ENCODE measurements at regions of chr10 and their contacts with region 1.

Region 1: GRCh38 chr10:62268399-62269114 is at the start of gene RTKN2:
- DNase-seq: peak; percentile 100
- ATAC-seq: peak; percentile 81
- H3K4me3 ChIP-seq: peak within 1 kb of the TSS; percentile 75
- H3K27ac ChIP-seq: peak within 1 kb of the TSS; percentile 12
- H3K4me1 ChIP-seq: peaks cover 45% of the 10 kb centered on the region
- H3K27me3 ChIP-seq: no peaks in the 10 kb centered on the region
- CTCF ChIP-seq: no peak
- total RNA-seq, gene RTKN2: 24.8 and 26.6 TPM in 2 replicates

Region 2: GRCh38 chr10:62308101-62308500 is 39.5 kb after region 1 on chr10:
- CTCF ChIA-PET with region 1: no interaction called
- POLR2A ChIA-PET with region 1: no interaction called
- intact Hi-C with region 1: no loop called
- DNase-seq: no peak
- ATAC-seq: no peak
- H3K4me3 ChIP-seq: no peak overlapping the region
- H3K27ac ChIP-seq: no peak overlapping the region
- H3K4me1 ChIP-seq: peaks cover 10% of the 10 kb centered on the region
- H3K27me3 ChIP-seq: no peaks in the 10 kb centered on the region
- CTCF ChIP-seq: no peak

Region 3: DNA sequence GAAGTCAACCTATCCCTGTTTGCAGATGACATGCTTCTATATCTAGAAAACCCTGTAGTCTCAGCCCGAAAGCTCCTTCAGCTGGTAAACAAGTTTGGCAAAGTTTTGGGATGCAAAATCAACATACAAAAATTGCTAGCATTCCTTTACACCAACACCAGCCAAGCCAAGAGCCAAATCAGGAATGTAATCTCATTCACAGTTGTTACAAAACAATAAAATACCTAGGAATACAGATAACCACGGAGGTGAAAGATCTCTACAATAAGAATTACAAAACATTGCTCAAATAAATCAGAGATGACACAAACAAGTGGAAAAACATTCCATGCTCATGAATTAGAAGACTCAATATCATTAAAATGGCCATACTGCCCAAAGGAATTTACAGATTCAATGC is 55.2 kb after region 1 on chr10:
- CTCF ChIA-PET with region 1: interaction called, 3 read pairs
- POLR2A ChIA-PET with region 1: interaction called, 5 read pairs
- intact Hi-C with region 1: loop called (anchors 5 kb)
- DNase-seq: peak; percentile 94
- ATAC-seq: peak; percentile 64
- H3K4me3 ChIP-seq: no peak overlapping the region
- H3K27ac ChIP-seq: no peak overlapping the region
- H3K4me1 ChIP-seq: peaks cover 8% of the 10 kb centered on the region
- H3K27me3 ChIP-seq: no peaks in the 10 kb centered on the region
- CTCF ChIP-seq: no peak

Region 4: DNA sequence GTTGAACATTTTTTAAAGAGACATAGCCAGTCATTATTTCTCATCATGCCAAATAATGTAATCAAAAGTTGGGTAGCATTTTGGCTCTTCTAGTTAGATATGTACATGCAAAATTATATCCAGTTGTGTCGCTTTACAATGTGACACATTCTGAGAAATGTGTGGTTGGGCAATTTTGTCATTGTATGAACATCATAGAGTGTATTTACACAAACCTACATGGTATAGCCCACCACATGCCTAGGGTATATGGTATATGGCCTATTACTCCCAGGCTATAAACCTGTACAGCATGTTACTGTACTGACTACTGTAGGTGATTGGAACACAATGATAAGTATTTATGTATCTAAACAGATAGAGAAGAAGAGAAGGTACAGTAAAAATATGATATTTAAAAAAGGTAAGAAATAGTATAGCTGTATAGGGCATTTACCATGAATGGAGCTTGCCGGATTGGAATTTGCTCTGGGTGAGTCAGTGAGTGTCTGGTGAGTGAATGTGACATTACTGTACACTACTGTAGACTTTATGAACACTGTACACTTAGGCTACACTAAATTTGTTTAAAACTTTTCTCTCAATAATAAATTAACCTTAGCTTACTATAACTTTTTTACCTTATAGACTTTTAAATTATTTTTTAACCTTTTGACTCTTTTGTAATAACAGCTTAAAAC is 122.1 kb after region 1 on chr10:
- CTCF ChIA-PET with region 1: no interaction called
- POLR2A ChIA-PET with region 1: interaction called, 5 read pairs
- intact Hi-C with region 1: loop called (anchors 1 kb)
- DNase-seq: peak; percentile 51
- ATAC-seq: peak; percentile 51
- H3K4me3 ChIP-seq: no peak overlapping the region
- H3K27ac ChIP-seq: no peak overlapping the region
- H3K4me1 ChIP-seq: peaks cover 26% of the 10 kb centered on the region
- H3K27me3 ChIP-seq: no peaks in the 10 kb centered on the region
- CTCF ChIP-seq: no peak

Region 5: DNA sequence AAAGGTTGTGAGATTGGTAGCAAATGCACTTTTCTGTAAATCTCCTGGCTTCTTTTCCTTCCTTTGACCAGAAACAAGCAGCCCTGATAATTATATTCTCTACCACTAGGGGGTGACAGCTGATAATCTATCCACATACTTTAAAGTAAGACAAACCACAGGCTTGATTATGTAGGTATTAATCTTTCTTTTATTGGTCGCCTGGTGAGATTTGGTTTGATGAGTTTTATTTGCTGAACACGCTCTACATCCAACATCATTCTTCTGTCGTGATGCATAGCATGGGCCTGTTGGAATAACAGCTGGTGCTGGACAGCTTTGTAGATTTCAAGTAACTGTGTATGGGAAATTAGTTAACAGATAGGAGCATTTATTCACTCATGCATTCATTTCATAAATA is 169.1 kb after region 1 on chr10:
- CTCF ChIA-PET with region 1: interaction called, 16 read pairs
- POLR2A ChIA-PET with region 1: interaction called, 4 read pairs
- intact Hi-C with region 1: loop called (anchors 1 kb)
- DNase-seq: peak; percentile 100
- ATAC-seq: peak; percentile 67
- H3K4me3 ChIP-seq: no peak overlapping the region
- H3K27ac ChIP-seq: no peak overlapping the region
- H3K4me1 ChIP-seq: peaks cover 24% of the 10 kb centered on the region
- H3K27me3 ChIP-seq: no peaks in the 10 kb centered on the region
- CTCF ChIP-seq: peak; percentile 100

Region 6: DNA sequence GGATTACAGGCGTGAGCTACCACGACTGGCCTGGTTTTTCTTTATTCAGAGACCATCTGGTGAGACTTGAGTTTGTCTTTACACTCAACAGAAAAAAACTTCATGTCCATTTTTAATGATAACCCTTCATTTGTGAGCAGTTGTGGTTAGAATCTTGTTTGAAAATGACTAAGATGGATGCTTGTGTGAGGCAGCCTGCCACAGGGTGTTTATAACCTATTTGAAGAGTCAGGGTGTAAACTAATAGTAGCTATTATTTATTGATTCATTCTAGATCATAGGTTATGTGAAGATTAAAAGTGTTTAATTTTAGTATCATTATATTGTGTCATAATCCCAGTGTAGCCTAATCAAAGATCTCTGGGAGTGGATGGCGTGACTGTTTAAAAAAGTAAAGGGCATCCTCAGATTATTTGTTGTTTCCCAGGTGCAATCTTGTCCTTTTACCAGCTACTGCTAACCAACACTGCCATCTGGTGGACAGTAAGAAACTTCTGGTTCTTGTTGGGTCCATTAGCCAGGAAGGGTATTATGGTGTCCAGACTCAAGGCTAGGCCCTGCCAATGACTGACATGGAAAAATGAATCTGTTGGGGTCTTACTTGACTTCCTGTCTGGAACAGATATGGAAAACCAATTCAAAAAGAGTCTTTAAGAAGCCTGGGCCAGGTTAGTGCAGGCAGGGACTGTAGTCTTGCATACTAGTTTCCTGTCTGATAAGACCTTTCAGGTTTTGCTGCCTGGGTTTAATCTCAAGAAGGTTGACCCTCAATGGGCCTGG is 889.5 kb after region 1 on chr10:
- CTCF ChIA-PET with region 1: interaction called, 4 read pairs
- POLR2A ChIA-PET with region 1: no interaction called
- intact Hi-C with region 1: loop called (anchors 5 kb)
- DNase-seq: peak; percentile 99
- ATAC-seq: peak; percentile 80
- H3K4me3 ChIP-seq: no peak overlapping the region
- H3K27ac ChIP-seq: peak overlapping the region; percentile 17
- H3K4me1 ChIP-seq: peaks cover 7% of the 10 kb centered on the region; the same call in 1 of the 2 replicates
- H3K27me3 ChIP-seq: no peaks in the 10 kb centered on the region
- CTCF ChIP-seq: peak; percentile 100